Aorta (tissue), 5 donors: ENCODE measurements at regions of chr2 and their contacts with region 1.

Region 1: DNA sequence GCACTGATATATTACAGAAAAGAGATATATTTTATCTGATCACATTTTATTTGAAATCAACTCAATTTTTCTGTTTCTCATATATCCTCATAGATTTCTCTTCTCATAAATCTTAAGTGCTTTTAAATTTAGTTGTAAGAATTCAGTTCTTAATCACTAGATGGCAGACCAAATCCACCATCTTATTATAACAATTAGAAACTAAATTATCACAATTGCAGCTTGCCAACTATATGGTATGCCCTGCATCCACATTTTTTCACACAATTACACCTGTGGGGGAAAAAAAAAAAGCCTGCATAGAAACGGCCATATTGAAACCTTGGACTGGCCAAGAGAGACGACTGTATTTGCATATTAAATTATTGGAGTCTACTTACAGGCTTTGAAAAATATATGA is 64.4 kb downstream of the COL5A2 start:
- DNase-seq: no peak
- ATAC-seq: no peak
- H3K4me3 ChIP-seq: peak overlapping the region in 1 of 2 donors; percentile 18
- H3K27ac ChIP-seq: no peak overlapping the region
- H3K4me1 ChIP-seq: peaks cover 0 to 5% of the 10 kb centered on the region in 2 donors
- H3K27me3 ChIP-seq: no peaks in the 10 kb centered on the region

Region 2: DNA sequence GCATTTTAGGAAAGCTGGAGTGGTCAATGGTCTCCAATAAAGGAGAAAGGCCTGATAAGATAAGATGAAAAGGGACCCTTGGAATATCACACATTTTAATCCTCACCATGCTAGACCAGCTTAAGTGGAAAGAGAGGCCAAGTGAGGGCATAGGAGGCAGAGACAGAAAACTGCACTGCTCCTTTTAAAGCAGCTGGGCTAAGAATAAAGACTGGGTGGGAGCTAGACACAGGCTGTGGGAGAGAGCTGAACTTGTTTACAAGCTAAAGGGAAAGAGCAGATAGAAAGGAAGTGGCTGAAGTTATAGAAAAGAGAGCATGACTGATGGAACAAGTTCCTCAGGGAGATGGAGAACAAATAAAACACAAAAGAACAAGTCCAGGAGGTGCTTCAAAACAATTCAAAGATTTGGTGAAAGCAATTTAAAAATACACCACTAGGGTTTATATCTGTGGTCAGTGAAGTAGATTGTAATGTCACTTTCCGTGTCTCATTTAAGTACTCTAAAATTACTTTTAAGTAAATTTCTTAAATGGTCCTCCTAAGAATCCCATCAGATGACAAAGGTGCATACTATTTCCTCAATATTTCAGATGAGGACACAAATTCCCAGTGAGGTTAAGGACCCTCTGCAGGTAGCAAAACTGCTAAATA is 57.0 kb after region 1 on chr2:
- intact Hi-C with region 1: loop called (anchors 5 to 10 kb)
- DNase-seq: no peak
- ATAC-seq: no peak
- H3K4me3 ChIP-seq: no peak overlapping the region
- H3K27ac ChIP-seq: peak overlapping the region in 1 of 2 donors; percentile 33
- H3K4me1 ChIP-seq: peaks cover 3 to 4% of the 10 kb centered on the region in 2 donors
- H3K27me3 ChIP-seq: no peaks in the 10 kb centered on the region

Region 3: GRCh38 chr2:189179570-189179950 is 64.4 kb after region 1 on chr2 and contains the start of gene COL5A2:
- intact Hi-C with region 1: loop called (anchors 5 to 10 kb)
- DNase-seq: peak; percentile 49 to 75
- ATAC-seq: peak; percentile 91
- H3K4me3 ChIP-seq: peak within 1 kb of the TSS; percentile 100
- H3K27ac ChIP-seq: peak within 1 kb of the TSS; percentile 67 to 85
- H3K4me1 ChIP-seq: no peaks in the 10 kb centered on the region
- H3K27me3 ChIP-seq: no peaks in the 10 kb centered on the region
- total RNA-seq, gene COL5A2: 81.0 to 115 TPM

Region 4: GRCh38 chr2:189261431-189261841 is 146.3 kb after region 1 on chr2:
- intact Hi-C with region 1: no loop called
- DNase-seq: no peak
- ATAC-seq: no peak
- H3K4me3 ChIP-seq: no peak overlapping the region
- H3K27ac ChIP-seq: no peak overlapping the region
- H3K4me1 ChIP-seq: peaks cover 5 to 7% of the 10 kb centered on the region in 2 donors
- H3K27me3 ChIP-seq: no peaks in the 10 kb centered on the region